Tibial artery (tissue), 4 donors: ENCODE measurements at regions of chr3 and their contacts with region 1.

Region 1: GRCh38 chr3:16789344-16790120 is 95.2 kb upstream of the PLCL2 start:
- DNase-seq: no peak
- H3K4me3 ChIP-seq: no peak overlapping the region
- H3K27ac ChIP-seq: no peak overlapping the region
- H3K4me1 ChIP-seq: no peaks in the 10 kb centered on the region
- H3K27me3 ChIP-seq: no peaks in the 10 kb centered on the region
- CTCF ChIP-seq: no peak

Region 2: GRCh38 chr3:14907043-14907966 is 1882.2 kb before region 1 on chr3:
- intact Hi-C with region 1: loop called (anchors 5 kb)
- DNase-seq: peak in 1 of 2 donors; percentile 63
- H3K4me3 ChIP-seq: no peak overlapping the region
- H3K27ac ChIP-seq: no peak overlapping the region
- H3K4me1 ChIP-seq: no peaks in the 10 kb centered on the region
- H3K27me3 ChIP-seq: no peaks in the 10 kb centered on the region
- CTCF ChIP-seq: no peak

Region 3: GRCh38 chr3:16079519-16079918 is 710.0 kb before region 1 on chr3:
- intact Hi-C with region 1: no loop called
- DNase-seq: no peak
- H3K4me3 ChIP-seq: no peak overlapping the region
- H3K27ac ChIP-seq: no peak overlapping the region
- H3K4me1 ChIP-seq: no peaks in the 10 kb centered on the region
- H3K27me3 ChIP-seq: no peaks in the 10 kb centered on the region
- CTCF ChIP-seq: no peak